ENCODE measurements at regions of chr12 and their contacts with region 1.

Region 1: GRCh38 chr12:47367912-47368537 is 288.3 kb upstream of the AMIGO2 start:
- DNase-seq: no peak
- ATAC-seq: no peak
- H3K4me3 ChIP-seq: no peak overlapping the region
- H3K4me3 Mint-ChIP-seq: no peak overlapping the region
- H3K27ac ChIP-seq: no peak overlapping the region
- H3K27ac Mint-ChIP-seq: no peak overlapping the region
- H3K4me1 ChIP-seq: peaks cover 32 to 40% of the 10 kb centered on the region in 2 donors
- H3K4me1 Mint-ChIP-seq: peaks cover 1 to 25% (median 14%) of the 10 kb centered on the region in 7 donors
- H3K27me3 ChIP-seq: no peaks in the 10 kb centered on the region
- H3K27me3 Mint-ChIP-seq: no peaks in the 10 kb centered on the region

Region 2: DNA sequence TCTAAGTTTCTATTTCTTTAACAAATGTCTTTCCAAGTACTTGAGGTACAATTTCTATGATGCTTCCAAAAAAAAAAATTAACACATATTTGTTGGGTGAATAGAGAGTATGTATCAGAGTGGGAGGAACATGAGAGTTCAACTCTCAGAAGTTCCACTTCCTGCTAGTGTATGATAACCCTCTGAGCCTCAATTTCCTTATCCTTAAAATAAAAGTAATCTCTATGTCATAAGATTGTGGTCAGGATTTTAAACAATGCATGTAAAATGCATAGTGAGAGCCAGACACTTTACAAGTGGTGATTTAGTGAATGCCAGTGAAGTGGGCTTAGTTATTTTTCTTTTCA is 18.0 kb before region 1 on chr12:
- CTCF ChIA-PET with region 1: interaction called, 3 read pairs
- POLR2A ChIA-PET with region 1: interaction called, 5 read pairs
- intact Hi-C with region 1: loop called in 1 of 2 experiments (anchors 2 kb)
- DNase-seq: peak in 4 of 9 donors; percentile 11 to 26 (median 20)
- ATAC-seq: peak; percentile 62
- H3K4me3 ChIP-seq: no peak overlapping the region
- H3K4me3 Mint-ChIP-seq: peak overlapping the region; percentile 33 to 71 (median 64)
- H3K27ac ChIP-seq: peak overlapping the region; percentile 45
- H3K27ac Mint-ChIP-seq: peak overlapping the region; percentile 78 to 94 (median 90)
- H3K4me1 ChIP-seq: peaks cover 14 to 30% of the 10 kb centered on the region in 2 donors
- H3K4me1 Mint-ChIP-seq: peaks cover 23 to 76% (median 63%) of the 10 kb centered on the region in 7 donors
- H3K27me3 ChIP-seq: no peaks in the 10 kb centered on the region
- H3K27me3 Mint-ChIP-seq: no peaks in the 10 kb centered on the region

Region 3: DNA sequence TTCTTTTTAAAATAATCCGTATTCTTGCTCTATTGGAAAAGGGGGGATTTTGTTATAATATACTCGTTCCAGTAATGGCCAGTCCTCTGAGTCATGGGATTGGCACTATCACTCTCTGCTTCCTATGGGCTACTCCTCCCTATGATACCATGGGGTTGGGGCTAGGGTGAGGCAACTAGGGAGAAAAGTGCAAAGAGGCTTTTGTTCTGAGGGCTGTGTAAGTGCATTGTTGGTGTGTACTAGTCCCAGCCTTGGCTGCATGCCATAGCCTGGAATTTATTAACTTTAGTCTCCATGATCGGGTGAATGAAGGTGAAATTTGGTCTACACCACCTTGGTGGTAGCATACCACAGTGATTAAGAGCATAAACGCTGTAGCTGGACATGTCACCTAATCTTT is 90.2 kb after region 1 on chr12:
- CTCF ChIA-PET with region 1: no interaction called
- POLR2A ChIA-PET with region 1: no interaction called
- intact Hi-C with region 1: no loop called
- DNase-seq: no peak
- ATAC-seq: no peak
- H3K4me3 ChIP-seq: no peak overlapping the region
- H3K4me3 Mint-ChIP-seq: no peak overlapping the region
- H3K27ac ChIP-seq: no peak overlapping the region
- H3K27ac Mint-ChIP-seq: no peak overlapping the region
- H3K4me1 ChIP-seq: no peaks in the 10 kb centered on the region
- H3K4me1 Mint-ChIP-seq: no peaks in the 10 kb centered on the region
- H3K27me3 ChIP-seq: no peaks in the 10 kb centered on the region
- H3K27me3 Mint-ChIP-seq: peaks cover 0 to 4% (median 0%) of the 10 kb centered on the region in 5 donors

Region 4: DNA sequence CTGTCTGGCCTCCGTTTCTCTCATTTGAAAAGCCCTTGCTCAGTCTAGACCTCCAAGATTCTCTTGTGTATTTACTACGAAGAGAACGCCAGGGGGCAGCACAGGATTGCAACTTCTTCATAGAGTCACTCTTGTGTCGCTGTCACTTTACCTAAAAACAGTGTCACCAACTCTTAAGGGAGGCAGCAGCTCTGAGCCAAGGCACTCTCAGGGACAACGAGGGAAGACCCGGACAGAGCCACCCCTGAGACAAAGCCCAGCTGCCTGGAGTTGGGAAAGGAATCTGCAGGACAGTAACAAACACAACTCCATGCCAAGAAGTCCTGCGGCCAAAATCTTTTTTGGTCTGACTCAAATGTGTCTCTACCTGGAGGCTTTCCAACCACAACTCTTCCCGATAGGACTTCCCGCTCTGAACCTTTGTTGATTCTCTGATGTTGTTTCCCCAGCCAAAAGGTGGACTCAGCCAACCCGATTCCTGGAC is 347.4 kb after region 1 on chr12:
- CTCF ChIA-PET with region 1: no interaction called
- POLR2A ChIA-PET with region 1: no interaction called
- intact Hi-C with region 1: no loop called
- DNase-seq: peak; percentile 56 to 83 (median 75)
- ATAC-seq: peak; percentile 87
- H3K4me3 ChIP-seq: no peak overlapping the region
- H3K4me3 Mint-ChIP-seq: peak overlapping the region in 7 of 10 donors; percentile 15 to 54 (median 44)
- H3K27ac ChIP-seq: no peak overlapping the region
- H3K27ac Mint-ChIP-seq: peak overlapping the region; percentile 26 to 91 (median 81)
- H3K4me1 ChIP-seq: peaks cover 0 to 25% of the 10 kb centered on the region in 2 donors
- H3K4me1 Mint-ChIP-seq: peaks cover 17 to 34% (median 26%) of the 10 kb centered on the region in 7 donors
- H3K27me3 ChIP-seq: no peaks in the 10 kb centered on the region
- H3K27me3 Mint-ChIP-seq: no peaks in the 10 kb centered on the region

Measured in naive thymus-derived CD4-positive, alpha-beta T cell (primary cell).